Activated CD4-positive, alpha-beta memory T cell treated with anti-CD3 and anti-CD28 coated beads for 36 hours (primary cell): ENCODE measurements at regions of chr16 and their contacts with region 1.

Region 1: DNA sequence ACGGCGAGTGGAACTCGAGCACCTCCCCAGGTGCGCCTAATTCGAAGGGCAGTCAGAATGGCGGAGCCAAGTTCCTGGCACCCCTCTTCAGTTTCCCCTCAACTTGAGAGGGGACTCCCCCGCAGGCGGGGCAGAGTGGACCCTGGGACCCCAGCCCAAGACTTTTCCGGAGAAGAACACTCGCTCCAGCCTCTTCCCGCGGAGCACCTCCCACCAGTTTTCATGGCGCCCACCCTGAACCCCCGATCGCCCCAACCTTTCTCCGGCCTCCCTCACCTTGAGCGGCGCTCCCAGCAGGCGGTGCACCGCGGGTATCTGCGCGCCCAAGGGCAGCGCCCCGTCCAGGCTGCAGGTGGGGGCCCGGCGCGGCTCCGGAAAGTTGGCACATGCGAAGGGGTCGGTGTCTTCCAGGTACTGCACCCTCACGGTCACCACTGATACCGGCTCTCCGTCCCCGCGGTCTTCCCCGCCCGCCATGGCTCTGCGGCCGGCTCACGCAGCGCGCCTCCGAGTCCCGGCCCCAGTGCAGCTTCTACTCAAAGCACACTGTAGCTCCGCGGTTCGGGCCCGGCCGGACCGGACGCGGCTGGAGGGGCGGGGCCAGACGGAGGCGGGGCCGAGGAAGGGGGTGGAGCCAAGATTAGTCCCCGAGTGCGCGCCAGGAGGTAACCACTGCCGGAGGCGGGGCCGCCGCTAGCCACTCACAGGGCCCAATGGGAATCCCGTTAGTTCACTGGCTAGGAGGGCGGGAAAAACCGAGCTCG is at the start of gene FHOD1:
- DNase-seq: peak; percentile 99
- H3K4me3 Mint-ChIP-seq: peak within 1 kb of the TSS; percentile 90
- H3K27ac Mint-ChIP-seq: peak within 1 kb of the TSS; percentile 86
- H3K4me1 Mint-ChIP-seq: peaks cover 47% of the 10 kb centered on the region
- H3K27me3 Mint-ChIP-seq: peaks cover 1% of the 10 kb centered on the region
- total RNA-seq, gene FHOD1: 96.3 to 111 TPM

Region 2: DNA sequence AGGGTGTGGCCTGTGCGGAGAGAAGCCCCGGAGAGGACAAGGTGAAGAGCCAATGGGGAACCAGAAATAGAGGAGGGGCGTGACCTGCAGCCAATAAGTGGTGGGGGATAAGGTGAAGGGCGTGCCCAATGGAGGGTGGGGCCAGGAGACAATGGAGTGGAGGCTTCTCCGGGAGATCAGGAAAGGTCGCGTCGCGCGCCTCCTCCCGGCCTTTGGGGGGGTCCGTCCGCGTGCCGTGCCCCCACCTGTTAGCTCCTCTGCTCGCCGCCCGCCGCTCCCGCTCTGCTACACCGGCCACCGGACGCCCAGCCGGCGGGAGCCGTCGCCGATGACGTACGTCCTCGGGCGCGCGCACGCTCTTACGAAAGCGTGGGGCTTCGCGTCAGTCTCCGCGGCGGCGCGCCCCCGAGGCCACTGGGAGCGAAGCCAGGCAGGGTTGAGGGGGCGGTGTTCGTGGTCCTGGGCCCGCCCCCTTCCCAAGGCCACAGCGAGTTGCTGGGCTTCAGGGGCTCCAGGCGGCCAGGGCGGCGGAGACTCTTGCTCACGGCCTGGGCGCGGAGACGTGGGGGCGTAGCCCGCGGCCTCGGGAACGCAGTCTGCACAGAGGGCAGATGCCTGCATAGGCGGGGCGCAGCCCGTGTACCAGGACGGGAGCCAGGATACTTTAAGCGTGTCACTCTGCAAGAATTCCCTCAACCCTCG is 63.3 kb before region 1 on chr16 and contains the start of gene MATCAP1:
- CTCF ChIA-PET with region 1: interaction called, 4 read pairs
- POLR2A ChIA-PET with region 1: interaction called, 3 read pairs
- intact Hi-C with region 1: loop called (anchors 2 kb)
- DNase-seq: peak; percentile 96
- H3K4me3 Mint-ChIP-seq: no peak within 1 kb of the TSS
- H3K27ac Mint-ChIP-seq: no peak within 1 kb of the TSS
- H3K4me1 Mint-ChIP-seq: peaks cover 14% of the 10 kb centered on the region
- H3K27me3 Mint-ChIP-seq: peaks cover 8% of the 10 kb centered on the region
- total RNA-seq, gene MATCAP1: 37.3 to 38.3 TPM

Region 3: GRCh38 chr16:67226804-67227557 is 20.1 kb before region 1 on chr16 and contains the start of gene TMEM208:
- CTCF ChIA-PET with region 1: interaction called, 15 read pairs
- POLR2A ChIA-PET with region 1: interaction called, 37 read pairs
- intact Hi-C with region 1: loop called (anchors 1 kb)
- DNase-seq: peak; percentile 99
- H3K4me3 Mint-ChIP-seq: peak within 1 kb of the TSS; percentile 98
- H3K27ac Mint-ChIP-seq: peak within 1 kb of the TSS; percentile 95
- H3K4me1 Mint-ChIP-seq: peaks cover 48% of the 10 kb centered on the region
- H3K27me3 Mint-ChIP-seq: no peaks in the 10 kb centered on the region
- total RNA-seq, gene TMEM208: 36.7 to 39.3 TPM

Region 4: GRCh38 chr16:67236563-67237395 is 10.3 kb before region 1 on chr16:
- CTCF ChIA-PET with region 1: interaction called, 4 read pairs
- POLR2A ChIA-PET with region 1: interaction called, 10 read pairs
- intact Hi-C with region 1: loop called (anchors 1 kb)
- DNase-seq: peak; percentile 91
- H3K4me3 Mint-ChIP-seq: peak overlapping the region; percentile 76
- H3K27ac Mint-ChIP-seq: peak overlapping the region; percentile 98
- H3K4me1 Mint-ChIP-seq: peaks cover 21% of the 10 kb centered on the region
- H3K27me3 Mint-ChIP-seq: no peaks in the 10 kb centered on the region

Region 5: DNA sequence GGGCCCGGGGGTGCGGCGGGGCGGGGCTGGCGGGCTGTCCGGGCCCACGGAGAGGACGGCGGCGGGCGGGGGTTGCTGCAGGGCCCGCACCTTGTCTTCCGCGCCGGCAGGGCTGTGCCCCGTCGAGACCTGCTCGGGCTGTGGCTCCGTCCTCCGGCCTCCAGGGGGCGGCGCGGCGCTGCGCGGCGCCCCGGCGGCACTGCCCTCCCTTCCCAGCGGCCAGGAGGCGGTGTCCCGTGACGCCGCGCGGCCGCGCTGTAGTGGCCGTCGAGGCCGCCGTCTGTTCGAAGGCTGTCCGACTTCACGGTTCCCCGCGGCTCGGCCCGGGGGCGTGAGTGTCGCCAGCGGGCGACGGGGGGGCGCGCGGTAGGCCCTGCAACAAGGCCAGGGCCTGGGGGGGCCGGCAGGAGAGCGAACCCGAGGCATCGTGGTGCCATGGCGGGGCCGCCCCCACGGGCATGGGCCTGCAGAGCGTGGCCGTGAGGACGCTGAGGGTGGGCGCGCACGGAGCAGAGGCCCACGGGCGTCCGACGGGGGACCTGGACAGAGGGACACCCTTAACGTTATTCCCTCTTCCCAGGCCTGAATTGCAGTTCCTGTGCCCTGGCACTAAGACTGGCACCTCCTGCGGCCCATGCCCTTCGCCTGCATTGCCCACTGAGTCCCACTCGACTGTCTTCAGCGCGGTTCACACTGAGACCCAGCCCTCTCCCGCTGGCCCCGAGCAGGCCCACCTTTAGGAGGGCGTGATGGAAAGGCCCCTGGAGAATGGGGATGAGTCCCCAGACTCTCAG is 32.4 kb after region 1 on chr16 and contains the start of gene PLEKHG4:
- CTCF ChIA-PET with region 1: interaction called, 10 read pairs
- POLR2A ChIA-PET with region 1: interaction called, 9 read pairs
- intact Hi-C with region 1: loop called (anchors 2 kb)
- DNase-seq: peak; percentile 90
- H3K4me3 Mint-ChIP-seq: peak within 1 kb of the TSS; percentile 86
- H3K27ac Mint-ChIP-seq: peak within 1 kb of the TSS; percentile 88
- H3K4me1 Mint-ChIP-seq: peaks cover 20% of the 10 kb centered on the region
- H3K27me3 Mint-ChIP-seq: no peaks in the 10 kb centered on the region
- total RNA-seq, gene PLEKHG4: 22.7 to 24.6 TPM

Region 6: DNA sequence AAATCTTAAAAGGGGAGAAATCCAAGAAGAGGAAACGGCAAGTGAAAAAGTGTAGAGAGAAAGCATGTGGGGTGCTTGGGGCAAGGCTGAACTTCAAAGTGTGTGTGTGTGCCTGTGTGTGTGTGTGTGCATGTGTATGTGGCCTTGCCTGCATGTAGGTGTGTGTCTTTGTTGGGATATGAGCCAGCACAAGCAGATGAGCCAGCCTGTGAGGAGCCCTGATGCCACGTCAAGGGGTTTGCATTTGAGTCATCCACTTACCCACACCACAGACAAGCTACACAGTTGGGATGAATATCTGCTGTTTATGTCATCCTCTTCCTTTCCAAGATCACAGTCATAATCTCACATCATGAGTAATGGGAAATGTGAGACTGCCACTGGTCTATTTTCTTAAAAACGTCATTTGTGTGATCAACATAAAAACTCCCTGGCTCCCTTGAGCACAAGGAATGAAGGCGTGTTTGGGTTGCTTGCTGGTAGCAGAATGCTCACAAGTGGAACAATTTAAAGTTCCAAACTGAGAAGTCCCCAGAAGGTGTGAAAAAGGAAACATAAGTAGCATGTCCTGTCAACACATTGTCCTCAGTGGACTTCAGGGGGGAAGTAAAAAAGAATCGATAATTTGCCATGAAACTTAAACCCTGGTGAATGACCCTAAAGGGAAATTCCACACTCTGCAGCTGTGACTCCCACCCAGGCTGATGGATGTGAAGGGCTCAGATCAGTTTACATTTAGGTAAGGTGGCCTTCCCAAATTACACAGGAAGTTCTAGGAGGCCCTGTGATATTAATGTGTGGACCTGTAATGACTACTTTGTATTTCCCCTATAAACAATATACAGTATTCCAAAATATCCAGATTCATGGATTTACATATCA is 64.7 kb after region 1 on chr16:
- CTCF ChIA-PET with region 1: no interaction called
- POLR2A ChIA-PET with region 1: interaction called, 4 read pairs
- intact Hi-C with region 1: loop called (anchors 1 kb)
- DNase-seq: peak; percentile 95
- H3K4me3 Mint-ChIP-seq: peak overlapping the region; percentile 20
- H3K27ac Mint-ChIP-seq: peak overlapping the region; percentile 95
- H3K4me1 Mint-ChIP-seq: peaks cover 41% of the 10 kb centered on the region
- H3K27me3 Mint-ChIP-seq: no peaks in the 10 kb centered on the region

Region 7: DNA sequence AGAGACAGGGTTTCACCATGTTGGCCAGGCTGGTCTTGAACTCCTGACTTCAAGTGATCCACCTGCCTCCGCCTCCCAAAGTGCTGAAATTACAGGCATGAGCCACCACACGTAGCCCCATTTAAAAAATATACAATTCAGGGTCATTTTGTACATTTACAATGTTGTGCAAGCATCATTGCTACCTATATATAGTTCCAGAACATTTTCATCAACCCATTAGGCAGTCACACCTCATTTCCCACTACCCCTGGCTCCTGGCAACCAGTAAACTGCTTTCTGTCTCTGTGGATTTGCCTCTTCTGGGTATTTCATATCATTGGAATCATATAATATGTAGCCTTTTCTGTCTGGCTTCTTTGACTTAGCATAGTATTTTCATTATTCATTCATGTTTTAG is 86.2 kb after region 1 on chr16:
- CTCF ChIA-PET with region 1: no interaction called
- POLR2A ChIA-PET with region 1: no interaction called
- intact Hi-C with region 1: no loop called
- DNase-seq: no peak
- H3K4me3 Mint-ChIP-seq: no peak overlapping the region
- H3K27ac Mint-ChIP-seq: no peak overlapping the region
- H3K4me1 Mint-ChIP-seq: no peaks in the 10 kb centered on the region
- H3K27me3 Mint-ChIP-seq: peaks cover 5% of the 10 kb centered on the region